Aorta (tissue), 5 donors: ENCODE measurements at regions of chr14 and their contacts with region 1.

Region 1: DNA sequence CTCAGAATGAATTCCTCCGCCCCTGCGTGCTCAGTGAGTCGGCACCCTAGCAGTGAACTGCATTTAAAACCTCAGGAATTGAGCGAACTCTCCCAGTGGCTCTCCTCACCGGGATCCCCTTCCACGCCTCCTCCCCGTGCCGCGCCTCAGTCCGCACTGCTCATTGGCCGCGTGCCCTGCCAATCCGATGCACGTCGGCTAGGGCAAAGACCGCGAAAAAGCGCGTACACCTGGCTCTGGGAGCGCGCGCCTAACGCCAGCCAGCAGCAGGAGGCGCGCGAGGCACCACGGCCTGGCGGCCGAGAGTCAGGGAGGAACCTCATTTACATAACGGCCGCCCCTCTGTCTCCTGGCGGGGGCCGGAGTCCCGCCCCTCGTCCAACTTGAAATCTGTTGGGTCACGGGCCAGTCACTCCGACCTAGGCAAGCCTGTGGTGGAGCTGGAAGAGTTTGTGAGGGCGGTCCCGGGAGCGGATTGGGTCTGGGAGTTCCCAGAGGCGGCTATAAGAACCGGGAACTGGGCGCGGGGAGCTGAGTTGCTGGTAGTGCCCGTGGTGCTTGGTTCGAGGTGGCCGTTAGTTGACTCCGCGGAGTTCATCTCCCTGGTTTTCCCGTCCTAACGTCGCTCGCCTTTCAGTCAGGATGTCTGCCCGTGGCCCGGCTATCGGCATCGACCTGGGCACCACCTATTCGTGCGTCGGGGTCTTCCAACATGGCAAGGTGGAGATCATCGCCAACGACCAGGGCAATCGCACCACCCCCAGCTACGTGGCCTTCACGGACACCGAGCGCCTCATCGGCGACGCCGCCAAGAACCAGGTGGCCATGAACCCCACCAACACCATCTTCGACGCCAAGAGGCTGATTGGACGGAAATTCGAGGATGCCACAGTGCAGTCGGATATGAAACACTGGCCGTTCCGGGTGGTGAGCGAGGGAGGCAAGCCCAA is at the start of gene HSPA2:
- DNase-seq: peak; percentile 99 to 100
- ATAC-seq: peak; percentile 98
- H3K4me3 ChIP-seq: peak within 1 kb of the TSS; percentile 42 to 45
- H3K27ac ChIP-seq: peak within 1 kb of the TSS; percentile 68 to 86
- H3K4me1 ChIP-seq: no peaks in the 10 kb centered on the region
- H3K27me3 ChIP-seq: no peaks in the 10 kb centered on the region
- total RNA-seq, gene HSPA2: 28.9 to 41.4 TPM

Region 2: DNA sequence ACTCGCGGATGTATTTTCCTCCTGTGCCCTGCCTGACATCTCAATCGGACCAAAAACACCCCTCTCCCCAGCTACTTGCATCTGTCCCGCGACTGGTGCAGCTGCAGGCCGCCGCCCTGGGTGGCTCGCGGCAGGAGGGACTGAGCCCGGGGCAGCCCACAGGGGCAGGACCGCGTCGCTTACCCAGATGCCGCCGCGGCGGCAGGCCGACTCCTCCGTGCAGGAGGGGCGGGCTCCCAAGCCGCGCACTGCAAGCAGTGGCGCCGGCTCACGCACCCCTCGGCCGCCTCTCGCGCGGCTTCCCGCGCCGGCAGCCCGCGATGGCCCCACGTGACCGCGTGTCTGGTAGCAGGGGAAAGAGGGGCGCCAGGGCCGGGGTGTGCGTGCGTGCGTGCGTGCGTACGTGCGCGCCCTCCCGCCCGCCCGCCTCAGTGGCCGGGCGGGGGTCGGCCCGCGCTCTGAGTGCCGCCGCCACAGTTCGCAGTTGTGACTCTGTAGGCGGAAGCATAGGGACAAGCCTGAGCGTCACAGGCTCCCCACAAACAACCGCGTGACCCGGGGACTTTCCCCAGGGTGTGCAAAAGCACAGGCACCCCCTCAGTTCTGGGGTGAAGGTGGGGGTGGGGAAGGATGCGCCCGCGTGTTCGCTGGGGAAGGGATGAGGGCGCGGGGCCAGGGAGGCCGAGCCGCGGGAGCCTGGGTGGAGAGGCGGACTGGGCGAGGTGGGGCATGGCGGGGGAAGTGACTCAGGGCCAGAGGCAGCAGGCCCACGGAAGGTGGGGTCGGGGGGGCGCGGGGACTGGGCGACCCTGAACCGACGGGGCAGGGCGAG is 36.8 kb before region 1 on chr14 and contains the start of gene ZBTB25:
- intact Hi-C with region 1: loop called (anchors 2 to 5 kb)
- DNase-seq: peak; percentile 95
- ATAC-seq: peak; percentile 92
- H3K4me3 ChIP-seq: peak within 1 kb of the TSS; percentile 74 to 88
- H3K27ac ChIP-seq: peak within 1 kb of the TSS; percentile 94
- H3K4me1 ChIP-seq: no peaks in the 10 kb centered on the region
- H3K27me3 ChIP-seq: no peaks in the 10 kb centered on the region
- total RNA-seq, gene ZBTB25: 17.2 to 25.4 TPM

Region 3: GRCh38 chr14:64566651-64567122 is 26.2 kb after region 1 on chr14:
- intact Hi-C with region 1: loop called in 1 of 2 experiments (anchors 2 kb)
- DNase-seq: no peak
- ATAC-seq: peak; percentile 58
- H3K4me3 ChIP-seq: no peak overlapping the region
- H3K27ac ChIP-seq: peak overlapping the region; percentile 68 to 99
- H3K4me1 ChIP-seq: peaks cover 3 to 4% of the 10 kb centered on the region in 2 donors
- H3K27me3 ChIP-seq: no peaks in the 10 kb centered on the region

Region 4: GRCh38 chr14:64636208-64636979 is 95.9 kb after region 1 on chr14:
- intact Hi-C with region 1: loop called (anchors 2 to 5 kb)
- DNase-seq: peak; percentile 74 to 87
- ATAC-seq: peak; percentile 93
- H3K4me3 ChIP-seq: no peak overlapping the region
- H3K27ac ChIP-seq: no peak overlapping the region
- H3K4me1 ChIP-seq: no peaks in the 10 kb centered on the region
- H3K27me3 ChIP-seq: no peaks in the 10 kb centered on the region

Region 5: DNA sequence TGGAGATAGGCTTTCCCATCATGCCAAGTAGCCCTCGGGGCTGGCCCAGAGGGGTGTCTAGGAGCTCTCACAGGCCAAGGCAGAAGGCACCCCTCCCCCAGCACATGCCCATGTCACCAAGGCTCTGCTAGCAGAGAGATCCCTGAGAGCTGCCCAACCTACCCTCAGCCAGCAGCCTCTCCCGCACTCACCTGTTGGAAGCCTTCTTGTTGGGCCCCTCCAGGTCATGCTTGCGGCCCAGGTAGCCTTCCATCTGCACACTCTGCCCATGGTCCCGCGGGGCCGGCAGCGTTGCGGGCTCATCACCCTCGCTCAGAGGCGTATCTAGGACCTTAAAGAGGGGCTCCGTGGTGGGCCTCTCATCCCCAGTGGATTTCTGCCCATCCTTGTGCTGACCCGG is 212.9 kb after region 1 on chr14:
- intact Hi-C with region 1: no loop called
- DNase-seq: no peak
- ATAC-seq: no peak
- H3K4me3 ChIP-seq: no peak overlapping the region
- H3K27ac ChIP-seq: no peak overlapping the region
- H3K4me1 ChIP-seq: peaks cover 0 to 2% of the 10 kb centered on the region in 2 donors
- H3K27me3 ChIP-seq: no peaks in the 10 kb centered on the region

Region 6: GRCh38 chr14:64764641-64765520 is 224.4 kb after region 1 on chr14:
- intact Hi-C with region 1: loop called in 1 of 2 experiments (anchors 10 kb)
- DNase-seq: peak; percentile 83 to 91
- ATAC-seq: peak; percentile 90
- H3K4me3 ChIP-seq: no peak overlapping the region
- H3K27ac ChIP-seq: no peak overlapping the region
- H3K4me1 ChIP-seq: no peaks in the 10 kb centered on the region
- H3K27me3 ChIP-seq: no peaks in the 10 kb centered on the region

Region 7: GRCh38 chr14:64914237-64914971 is 373.9 kb after region 1 on chr14 and contains the start of gene CHURC1:
- intact Hi-C with region 1: loop called in 1 of 2 experiments (anchors 10 kb)
- DNase-seq: peak; percentile 100
- ATAC-seq: peak; percentile 98
- H3K4me3 ChIP-seq: peak within 1 kb of the TSS; percentile 44 to 91
- H3K27ac ChIP-seq: peak within 1 kb of the TSS; percentile 84 to 86
- H3K4me1 ChIP-seq: peaks cover 5 to 6% of the 10 kb centered on the region in 2 donors
- H3K27me3 ChIP-seq: no peaks in the 10 kb centered on the region
- total RNA-seq, gene CHURC1: 75.6 to 80.4 TPM